IMR-90 (cell line): ENCODE measurements at regions of chr5 and their contacts with region 1.

Region 1: DNA sequence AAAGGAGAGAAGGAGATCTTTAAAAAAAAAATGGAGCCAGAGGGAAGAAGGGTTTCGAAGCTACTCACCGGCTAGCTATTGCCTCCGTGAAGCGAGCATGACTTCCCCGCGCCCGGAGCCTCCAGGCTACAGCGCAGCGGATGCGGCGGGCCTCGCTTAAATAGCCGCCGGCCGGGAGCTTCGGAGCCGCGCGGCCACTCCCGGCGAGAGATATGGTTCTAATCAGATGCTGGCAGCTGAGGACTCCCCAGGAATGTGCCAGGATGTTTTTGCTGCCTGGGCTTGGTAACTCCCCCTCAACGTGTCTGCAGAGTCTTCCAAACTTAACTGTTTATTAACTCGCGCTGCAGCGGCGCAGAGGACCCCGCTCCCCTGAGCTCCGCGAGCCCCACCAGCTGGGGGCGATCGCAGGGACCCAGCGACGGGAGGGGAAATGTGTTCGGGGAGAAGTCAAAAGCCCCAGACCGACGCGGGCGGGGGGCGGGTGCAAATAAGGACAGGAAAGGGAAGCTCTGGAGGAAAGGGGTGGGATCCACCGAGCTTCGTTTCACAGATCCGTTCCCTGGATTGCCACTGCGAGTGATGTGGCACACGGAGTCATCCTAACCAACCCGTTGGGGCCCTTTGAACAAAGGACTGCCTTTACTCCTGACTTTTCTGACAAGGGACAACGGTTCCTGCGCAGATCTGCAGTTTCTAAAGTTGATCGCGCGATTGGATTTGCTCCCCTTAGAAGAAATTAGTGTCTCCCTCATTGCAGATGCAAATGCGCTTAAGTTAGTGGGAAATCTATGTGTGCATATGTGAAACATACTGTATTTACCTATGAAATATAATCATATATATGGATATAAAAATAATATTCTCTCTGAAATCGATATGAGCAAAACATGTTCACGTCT is at the start of gene DAB2:
- DNase-seq: peak; percentile 96
- ATAC-seq: peak; percentile 77
- H3K4me3 ChIP-seq: peak within 1 kb of the TSS; percentile 99
- H3K27ac ChIP-seq: peak within 1 kb of the TSS; percentile 89
- H3K4me1 ChIP-seq: peaks cover 18% of the 10 kb centered on the region
- H3K27me3 ChIP-seq: no peaks in the 10 kb centered on the region
- CTCF ChIP-seq: peak; percentile 78
- POLR2A ChIP-seq: peak; percentile 98
- RAD21 ChIP-seq: peak; percentile 61
- total RNA-seq, gene DAB2: 50.0 and 97.2 TPM in 2 replicates

Region 2: DNA sequence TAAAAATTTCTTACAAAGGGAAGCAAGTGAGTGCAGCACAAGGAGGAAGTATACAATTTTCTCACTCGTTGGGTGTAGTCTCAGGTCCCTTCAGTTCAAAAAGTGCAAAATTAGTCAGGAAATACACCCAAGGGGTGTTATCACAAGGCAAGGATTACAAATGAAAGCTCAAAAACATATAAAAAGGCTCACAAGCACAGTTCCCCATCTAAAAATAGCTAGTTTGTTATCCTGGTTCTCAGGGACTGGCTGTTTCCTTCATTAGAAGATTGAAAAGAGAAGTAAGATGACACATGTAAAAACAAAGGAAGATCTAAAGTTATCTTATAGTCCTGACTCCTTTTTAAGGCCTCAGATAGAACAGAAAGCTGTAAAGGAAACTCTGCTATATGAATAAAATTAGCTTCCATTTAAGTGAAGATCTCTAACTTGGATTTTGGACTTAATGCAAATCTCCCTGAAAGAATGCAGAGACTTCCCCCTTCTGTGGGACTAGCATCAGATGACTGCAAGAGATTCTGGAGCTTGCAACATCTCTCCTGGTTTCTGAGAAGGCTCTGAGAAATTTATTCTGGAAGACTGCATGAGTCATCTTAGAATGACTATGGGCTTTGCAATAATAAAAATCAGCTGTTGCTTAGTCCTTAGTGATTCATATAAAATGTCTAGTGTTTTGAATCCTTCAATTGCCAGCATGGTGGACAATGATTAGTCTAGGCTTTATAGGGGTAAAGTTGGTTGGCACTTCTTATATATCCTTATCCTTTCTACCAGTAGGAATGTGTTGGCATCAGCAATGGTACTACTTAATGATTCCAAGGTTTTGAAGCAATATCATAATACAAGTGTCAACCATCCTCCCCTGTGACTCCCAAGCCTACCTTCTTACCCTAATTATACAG is 25.6 kb before region 1 on chr5:
- CTCF ChIA-PET with region 1: interaction called, 6 read pairs
- POLR2A ChIA-PET with region 1: interaction called, 8 read pairs
- dilution Hi-C with region 1: no loop called
- in situ Hi-C with region 1: no loop called
- intact Hi-C with region 1: loop called (anchors 1 kb)
- DNase-seq: peak; percentile 98
- ATAC-seq: peak; percentile 71
- H3K4me3 ChIP-seq: no peak overlapping the region
- H3K27ac ChIP-seq: peak overlapping the region; percentile 75; the same call in 1 of the 2 replicates
- H3K4me1 ChIP-seq: peaks cover 38% of the 10 kb centered on the region
- H3K27me3 ChIP-seq: no peaks in the 10 kb centered on the region
- CTCF ChIP-seq: no peak
- POLR2A ChIP-seq: no peak
- RAD21 ChIP-seq: 0 out of 2 replicates have a peak, but pooled peaks have one; percentile 7

Region 3: DNA sequence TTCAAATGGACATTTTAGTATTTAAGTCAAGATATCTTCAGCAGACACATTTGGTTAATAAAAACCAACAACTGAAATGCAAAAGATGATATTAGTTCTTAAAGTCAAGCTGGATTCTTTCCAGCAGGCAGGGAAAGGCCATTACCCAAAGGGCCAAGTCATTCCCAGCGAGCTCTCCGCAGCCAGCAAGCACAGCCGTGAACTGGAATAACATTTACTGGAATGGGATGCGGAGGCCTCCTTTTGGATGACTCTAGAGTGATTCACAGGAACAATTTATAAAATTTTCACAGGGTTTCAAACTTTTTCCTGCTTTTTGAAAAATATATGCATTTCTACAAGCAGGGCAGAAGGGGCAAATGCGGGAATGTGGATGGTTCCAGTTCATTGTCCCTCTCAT is 76.4 kb after region 1 on chr5:
- CTCF ChIA-PET with region 1: interaction called, 3 read pairs
- POLR2A ChIA-PET with region 1: interaction called, 14 read pairs
- dilution Hi-C with region 1: no loop called
- in situ Hi-C with region 1: no loop called
- intact Hi-C with region 1: no loop called
- DNase-seq: peak; percentile 90
- ATAC-seq: peak; percentile 80
- H3K4me3 ChIP-seq: no peak overlapping the region
- H3K27ac ChIP-seq: peak overlapping the region; percentile 75; the same call in 1 of the 2 replicates
- H3K4me1 ChIP-seq: peaks cover 21% of the 10 kb centered on the region
- H3K27me3 ChIP-seq: no peaks in the 10 kb centered on the region
- CTCF ChIP-seq: no peak
- POLR2A ChIP-seq: no peak
- RAD21 ChIP-seq: no peak

Region 4: GRCh38 chr5:39547553-39548154 is 122.7 kb after region 1 on chr5:
- CTCF ChIA-PET with region 1: interaction called, 24 read pairs
- POLR2A ChIA-PET with region 1: interaction called, 16 read pairs
- dilution Hi-C with region 1: no loop called
- in situ Hi-C with region 1: no loop called
- intact Hi-C with region 1: loop called (anchors 1 kb)
- DNase-seq: peak; percentile 68
- ATAC-seq: peak; percentile 86
- H3K4me3 ChIP-seq: no peak overlapping the region
- H3K27ac ChIP-seq: no peak overlapping the region
- H3K4me1 ChIP-seq: peaks cover 1% of the 10 kb centered on the region; the same call in 1 of the 2 replicates
- H3K27me3 ChIP-seq: no peaks in the 10 kb centered on the region; the same call in 1 of the 2 replicates
- CTCF ChIP-seq: peak; percentile 81
- POLR2A ChIP-seq: no peak
- RAD21 ChIP-seq: peak; percentile 82

Region 5: DNA sequence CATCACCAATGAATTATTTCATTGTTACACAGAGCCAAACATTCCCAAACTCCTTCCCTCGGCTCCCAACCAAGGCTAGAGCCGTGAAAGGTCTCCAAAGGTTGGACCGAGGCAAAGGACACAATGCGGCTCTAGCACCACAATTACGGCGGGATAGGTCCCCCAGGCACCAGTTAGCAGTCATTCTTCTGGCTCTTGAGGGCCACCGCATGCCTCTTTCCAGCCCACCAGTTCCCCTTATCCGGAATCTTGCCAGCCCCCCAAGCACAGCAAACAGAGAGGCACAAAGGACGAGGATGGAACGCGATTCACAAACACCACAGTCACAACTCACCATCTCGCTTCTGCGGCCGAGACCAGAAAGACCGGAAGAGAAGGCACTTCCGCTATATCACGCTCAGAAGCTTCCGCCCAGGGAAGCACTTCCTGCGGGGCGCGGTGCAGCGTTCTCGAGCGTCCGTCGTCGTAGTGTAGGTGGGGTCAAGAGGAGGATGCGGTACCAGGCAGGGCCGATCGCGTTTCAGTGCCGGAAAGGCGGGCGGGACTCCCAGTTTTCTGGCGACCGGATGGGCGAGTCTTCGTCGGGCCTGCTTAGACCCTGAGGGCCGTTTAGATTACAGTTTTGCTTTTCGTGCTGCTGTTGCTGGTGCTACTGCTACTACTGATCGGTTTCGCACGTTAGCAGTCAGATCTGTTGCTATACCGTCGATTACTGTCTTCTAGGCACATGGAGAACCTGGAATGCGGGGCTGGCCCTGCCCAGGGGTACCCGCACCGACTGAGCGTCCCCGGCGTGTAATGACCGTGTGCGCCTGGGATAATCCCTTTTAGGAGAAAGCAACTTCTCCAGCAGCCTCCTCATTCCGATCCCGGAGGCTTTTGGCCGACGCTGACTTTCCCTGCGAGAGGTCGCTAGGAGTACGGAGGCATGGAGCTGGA is 1410.1 kb after region 1 on chr5 and contains the start of gene RPL37:
- CTCF ChIA-PET with region 1: no interaction called
- POLR2A ChIA-PET with region 1: no interaction called
- dilution Hi-C with region 1: no loop called
- in situ Hi-C with region 1: no loop called
- intact Hi-C with region 1: loop called (anchors 5 kb)
- DNase-seq: peak; percentile 97
- ATAC-seq: peak; percentile 97
- H3K4me3 ChIP-seq: peak within 1 kb of the TSS; percentile 74
- H3K27ac ChIP-seq: peak within 1 kb of the TSS; percentile 89
- H3K4me1 ChIP-seq: peaks cover 2% of the 10 kb centered on the region; the same call in 1 of the 2 replicates
- H3K27me3 ChIP-seq: no peaks in the 10 kb centered on the region
- CTCF ChIP-seq: no peak
- POLR2A ChIP-seq: peak; percentile 98
- RAD21 ChIP-seq: no peak; the same call in 1 of the 2 replicates
- total RNA-seq, gene RPL37: 35.3 and 68.6 TPM in 2 replicates